Caco-2 (cell line): ENCODE measurements at regions of chr3 and their contacts with region 1.

Region 1: GRCh38 chr3:15007681-15008141 is 57.4 kb downstream of the MRPS25 start:
- DNase-seq: no peak
- H3K4me3 ChIP-seq: no peak overlapping the region
- H3K4me3 Mint-ChIP-seq: no peak overlapping the region
- H3K27ac Mint-ChIP-seq: no peak overlapping the region
- H3K4me1 ChIP-seq: peaks cover 11% of the 10 kb centered on the region; the same call in 1 of the 2 replicates
- H3K4me1 Mint-ChIP-seq: peaks cover 7% of the 10 kb centered on the region
- H3K27me3 ChIP-seq: no peaks in the 10 kb centered on the region
- H3K27me3 Mint-ChIP-seq: no peaks in the 10 kb centered on the region
- CTCF ChIP-seq: no peak

Region 2: GRCh38 chr3:14879211-14879874 is 128.4 kb before region 1 on chr3:
- CTCF ChIA-PET with region 1: no interaction called
- POLR2A ChIA-PET with region 1: no interaction called
- intact Hi-C with region 1: no loop called
- DNase-seq: no peak
- H3K4me3 ChIP-seq: no peak overlapping the region
- H3K4me3 Mint-ChIP-seq: no peak overlapping the region
- H3K27ac Mint-ChIP-seq: no peak overlapping the region
- H3K4me1 ChIP-seq: no peaks in the 10 kb centered on the region
- H3K4me1 Mint-ChIP-seq: no peaks in the 10 kb centered on the region
- H3K27me3 ChIP-seq: no peaks in the 10 kb centered on the region
- H3K27me3 Mint-ChIP-seq: peaks cover 9% of the 10 kb centered on the region
- CTCF ChIP-seq: no peak

Region 3: GRCh38 chr3:14989943-14990779 is 17.6 kb before region 1 on chr3:
- CTCF ChIA-PET with region 1: no interaction called
- POLR2A ChIA-PET with region 1: interaction called, 10 read pairs
- intact Hi-C with region 1: no loop called
- DNase-seq: no peak
- H3K4me3 ChIP-seq: no peak overlapping the region
- H3K4me3 Mint-ChIP-seq: no peak overlapping the region
- H3K27ac Mint-ChIP-seq: no peak overlapping the region
- H3K4me1 ChIP-seq: no peaks in the 10 kb centered on the region
- H3K4me1 Mint-ChIP-seq: peaks cover 6% of the 10 kb centered on the region
- H3K27me3 ChIP-seq: no peaks in the 10 kb centered on the region
- H3K27me3 Mint-ChIP-seq: no peaks in the 10 kb centered on the region
- CTCF ChIP-seq: no peak